Activated T-helper 1 cell treated with anti-CD3 and anti-CD28 coated beads, Interleukin-12 subunit alpha, Interleukin-12 subunit beta, Interleukin-2, Interleukin-4 antibody, amounts not matched to agents 30 ng/mL and 10 ng/mL and 1 ng/mL, durations not matched to agents 14 hours and 24 hours and 36 hours (primary cell): ENCODE measurements at regions of chr16 and their contacts with region 1.

Region 1: GRCh38 chr16:10988164-10988803 is 43.9 kb downstream of the CLEC16A start:
- DNase-seq: peak; percentile 64
- H3K4me3 Mint-ChIP-seq: peak overlapping the region; percentile 65
- H3K27ac Mint-ChIP-seq: peak overlapping the region; percentile 93
- H3K4me1 Mint-ChIP-seq: peaks cover 92% of the 10 kb centered on the region
- H3K27me3 Mint-ChIP-seq: no peaks in the 10 kb centered on the region

Region 2: GRCh38 chr16:11025120-11025531 is 36.8 kb after region 1 on chr16:
- intact Hi-C with region 1: loop called (anchors 1 kb)
- DNase-seq: no peak
- H3K4me3 Mint-ChIP-seq: no peak overlapping the region
- H3K27ac Mint-ChIP-seq: peak overlapping the region; percentile 82
- H3K4me1 Mint-ChIP-seq: peaks cover 31% of the 10 kb centered on the region
- H3K27me3 Mint-ChIP-seq: no peaks in the 10 kb centered on the region

Region 3: GRCh38 chr16:11063448-11064201 is 75.3 kb after region 1 on chr16:
- intact Hi-C with region 1: no loop called
- DNase-seq: no peak
- H3K4me3 Mint-ChIP-seq: no peak overlapping the region
- H3K27ac Mint-ChIP-seq: no peak overlapping the region
- H3K4me1 Mint-ChIP-seq: peaks cover 41% of the 10 kb centered on the region
- H3K27me3 Mint-ChIP-seq: no peaks in the 10 kb centered on the region

Region 4: GRCh38 chr16:11076259-11077018 is 88.2 kb after region 1 on chr16:
- intact Hi-C with region 1: loop called (anchors 1 kb)
- DNase-seq: peak; percentile 36
- H3K4me3 Mint-ChIP-seq: peak overlapping the region; percentile 48
- H3K27ac Mint-ChIP-seq: peak overlapping the region; percentile 90
- H3K4me1 Mint-ChIP-seq: peaks cover 94% of the 10 kb centered on the region
- H3K27me3 Mint-ChIP-seq: peaks cover 2% of the 10 kb centered on the region

Region 5: DNA sequence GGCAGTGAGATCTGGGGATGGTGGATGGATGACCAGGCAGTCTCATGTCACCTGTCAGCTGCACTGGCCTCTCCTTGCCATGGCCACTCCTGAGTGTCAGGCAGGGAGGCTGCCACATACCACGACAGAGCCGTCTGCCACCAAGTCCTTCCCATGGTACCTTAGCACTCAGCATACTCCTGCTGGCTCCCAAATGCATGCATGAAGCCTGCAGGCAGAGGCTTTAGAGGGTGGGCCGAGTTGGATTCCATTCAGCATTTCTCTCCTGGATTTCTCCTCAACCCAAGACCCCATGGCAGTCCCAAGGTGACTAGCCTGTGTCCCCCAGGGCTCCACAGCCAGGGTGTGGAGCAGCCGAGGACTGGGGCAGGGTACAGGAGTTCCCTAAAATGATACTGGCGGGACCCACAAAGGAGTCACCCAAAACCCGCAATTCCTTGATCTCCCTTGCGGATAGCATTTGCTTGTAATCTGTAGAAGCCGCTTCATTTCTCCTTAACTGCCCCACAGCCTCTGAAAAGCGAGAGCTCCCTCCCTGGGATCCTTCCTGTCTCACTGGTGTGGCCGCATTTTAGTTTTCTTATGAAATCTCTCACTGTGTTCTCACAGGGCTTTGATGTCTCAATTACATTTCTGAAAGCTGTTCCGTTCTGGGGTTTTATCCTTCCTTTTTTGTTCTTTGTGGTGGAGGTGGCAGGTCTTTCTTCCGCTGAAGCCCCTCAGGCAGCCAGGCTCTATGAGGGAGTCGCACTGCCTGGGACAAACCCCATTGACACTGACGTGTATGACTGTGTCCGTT is 126.3 kb after region 1 on chr16:
- intact Hi-C with region 1: loop called (anchors 1 kb)
- DNase-seq: peak; percentile 55
- H3K4me3 Mint-ChIP-seq: peak overlapping the region; percentile 40
- H3K27ac Mint-ChIP-seq: peak overlapping the region; percentile 88
- H3K4me1 Mint-ChIP-seq: peaks cover 44% of the 10 kb centered on the region
- H3K27me3 Mint-ChIP-seq: no peaks in the 10 kb centered on the region

Region 6: GRCh38 chr16:11232852-11233726 is 244.8 kb after region 1 on chr16:
- intact Hi-C with region 1: loop called (anchors 1 kb)
- DNase-seq: peak; percentile 91
- H3K4me3 Mint-ChIP-seq: peak overlapping the region; percentile 59
- H3K27ac Mint-ChIP-seq: peak overlapping the region; percentile 95
- H3K4me1 Mint-ChIP-seq: peaks cover 89% of the 10 kb centered on the region
- H3K27me3 Mint-ChIP-seq: no peaks in the 10 kb centered on the region